ENCODE measurements at regions of chr1 and their contacts with region 1.

Region 1: GRCh38 chr1:226662642-226663326 is 76.3 kb downstream of the ITPKB start:
- DNase-seq: peak; percentile 69 to 99 (median 85)
- ATAC-seq: peak; percentile 83
- H3K4me3 ChIP-seq: peak overlapping the region; percentile 1 to 13
- H3K4me3 Mint-ChIP-seq: peak overlapping the region; percentile 59
- H3K27ac ChIP-seq: peak overlapping the region in 1 of 2 experiments; percentile 65
- H3K27ac Mint-ChIP-seq: no peak overlapping the region
- H3K4me1 ChIP-seq: no peaks in the 10 kb centered on the region
- H3K4me1 Mint-ChIP-seq: peaks cover 89% of the 10 kb centered on the region
- H3K27me3 ChIP-seq: no peaks in the 10 kb centered on the region
- H3K27me3 Mint-ChIP-seq: no peaks in the 10 kb centered on the region
- CTCF ChIP-seq: no peak

Region 2: GRCh38 chr1:225735252-225736149 is 927.3 kb before region 1 on chr1:
- CTCF ChIA-PET with region 1: no interaction called
- POLR2A ChIA-PET with region 1: no interaction called
- intact Hi-C with region 1: no loop called
- DNase-seq: no peak
- ATAC-seq: no peak
- H3K4me3 ChIP-seq: no peak overlapping the region
- H3K4me3 Mint-ChIP-seq: no peak overlapping the region
- H3K27ac ChIP-seq: no peak overlapping the region
- H3K27ac Mint-ChIP-seq: no peak overlapping the region
- H3K4me1 ChIP-seq: no peaks in the 10 kb centered on the region
- H3K4me1 Mint-ChIP-seq: no peaks in the 10 kb centered on the region
- H3K27me3 ChIP-seq: no peaks in the 10 kb centered on the region
- H3K27me3 Mint-ChIP-seq: no peaks in the 10 kb centered on the region
- CTCF ChIP-seq: no peak

Region 3: GRCh38 chr1:226186124-226187018 is 476.4 kb before region 1 on chr1 and contains the start of gene ACBD3:
- CTCF ChIA-PET with region 1: no interaction called
- POLR2A ChIA-PET with region 1: no interaction called
- intact Hi-C with region 1: no loop called
- DNase-seq: peak; percentile 67 to 95 (median 87)
- ATAC-seq: peak; percentile 97
- H3K4me3 ChIP-seq: peak within 1 kb of the TSS; percentile 82 to 90
- H3K4me3 Mint-ChIP-seq: peak within 1 kb of the TSS; percentile 92
- H3K27ac ChIP-seq: peak within 1 kb of the TSS; percentile 72 to 88
- H3K27ac Mint-ChIP-seq: peak within 1 kb of the TSS; percentile 95
- H3K4me1 ChIP-seq: peaks cover 41% of the 10 kb centered on the region
- H3K4me1 Mint-ChIP-seq: peaks cover 40% of the 10 kb centered on the region
- H3K27me3 ChIP-seq: no peaks in the 10 kb centered on the region
- H3K27me3 Mint-ChIP-seq: no peaks in the 10 kb centered on the region
- CTCF ChIP-seq: no peak
- total RNA-seq, gene ACBD3: 40.9 to 41.4 TPM

Region 4: DNA sequence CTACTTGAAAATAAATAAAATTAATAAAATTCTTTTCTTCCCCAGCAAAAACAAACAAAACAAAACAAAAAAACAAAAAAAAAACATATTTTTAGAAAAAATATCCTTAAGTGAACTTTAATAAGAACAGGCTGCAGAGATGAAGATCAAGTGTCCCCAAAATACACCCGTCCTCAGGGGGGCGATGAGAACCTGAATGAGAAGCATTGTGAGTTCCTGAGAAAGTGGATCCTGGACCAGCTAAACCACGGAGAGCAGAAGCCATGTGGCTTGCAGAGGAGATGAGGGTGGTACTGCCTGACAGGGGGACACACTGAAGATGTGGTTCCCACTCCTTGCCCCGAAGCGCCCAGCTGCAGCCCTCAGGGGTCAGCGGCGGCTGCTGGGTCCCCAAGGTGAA is 13.0 kb before region 1 on chr1:
- CTCF ChIA-PET with region 1: interaction called, 11 read pairs
- POLR2A ChIA-PET with region 1: interaction called, 10 read pairs
- intact Hi-C with region 1: loop called in 1 of 2 experiments (anchors 1 kb)
- DNase-seq: peak in 6 of 9 experiments; percentile 53 to 74 (median 64)
- ATAC-seq: no peak
- H3K4me3 ChIP-seq: no peak overlapping the region
- H3K4me3 Mint-ChIP-seq: no peak overlapping the region
- H3K27ac ChIP-seq: peak overlapping the region in 1 of 2 experiments; percentile 23
- H3K27ac Mint-ChIP-seq: no peak overlapping the region
- H3K4me1 ChIP-seq: peaks cover 52% of the 10 kb centered on the region
- H3K4me1 Mint-ChIP-seq: peaks cover 57% of the 10 kb centered on the region
- H3K27me3 ChIP-seq: no peaks in the 10 kb centered on the region
- H3K27me3 Mint-ChIP-seq: no peaks in the 10 kb centered on the region
- CTCF ChIP-seq: peak; percentile 59

Region 5: DNA sequence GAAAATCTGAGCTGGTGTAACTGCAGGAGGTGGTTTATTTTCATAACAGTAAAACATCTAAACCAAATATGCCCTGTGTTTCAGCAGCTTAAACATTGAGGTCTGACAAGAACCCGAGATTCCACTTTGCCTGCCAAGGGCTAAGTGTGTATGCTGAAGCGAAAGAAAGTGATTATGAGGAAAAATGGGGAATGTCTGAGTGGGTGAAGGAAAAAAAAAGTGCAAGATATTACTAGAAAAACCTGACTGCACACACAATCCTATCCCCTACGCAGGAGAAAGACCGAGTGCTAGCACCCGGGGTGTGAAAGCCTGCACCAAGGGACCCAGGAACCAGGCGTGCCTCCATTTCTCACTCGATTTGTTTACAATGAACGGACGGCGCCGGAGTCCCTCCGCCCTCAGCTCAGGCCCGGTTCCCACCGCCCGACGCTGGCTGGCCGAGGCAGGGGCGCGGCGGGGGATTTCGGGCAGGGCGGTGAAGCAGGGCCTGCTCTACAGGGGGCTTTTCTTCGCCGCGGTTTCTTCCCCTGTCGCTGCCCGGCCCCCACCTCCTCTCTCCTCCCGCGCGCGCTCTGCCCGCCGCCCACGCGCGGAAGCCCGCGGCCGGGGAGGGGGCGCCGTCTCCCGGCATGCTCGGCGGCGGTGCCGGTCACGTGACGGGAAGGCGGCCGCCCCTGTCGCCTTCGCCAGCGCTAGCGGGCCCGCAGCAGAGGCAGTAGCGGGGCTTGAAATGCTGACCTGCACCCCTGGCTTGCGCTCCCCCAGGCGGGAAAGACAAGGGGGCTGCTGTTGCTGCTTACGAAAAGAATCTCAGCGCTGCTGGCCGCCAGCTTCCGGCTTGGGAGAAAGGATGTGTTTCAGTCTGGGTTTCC is 40.4 kb after region 1 on chr1:
- CTCF ChIA-PET with region 1: interaction called, 5 read pairs
- POLR2A ChIA-PET with region 1: no interaction called
- intact Hi-C with region 1: loop called in 1 of 2 experiments (anchors 1 kb)
- DNase-seq: peak; percentile 56 to 94 (median 80)
- ATAC-seq: peak; percentile 82
- H3K4me3 ChIP-seq: peak overlapping the region; percentile 51 to 54
- H3K4me3 Mint-ChIP-seq: peak overlapping the region; percentile 72
- H3K27ac ChIP-seq: peak overlapping the region; percentile 72 to 92
- H3K27ac Mint-ChIP-seq: peak overlapping the region; percentile 92
- H3K4me1 ChIP-seq: peaks cover 85% of the 10 kb centered on the region
- H3K4me1 Mint-ChIP-seq: peaks cover 88% of the 10 kb centered on the region
- H3K27me3 ChIP-seq: no peaks in the 10 kb centered on the region
- H3K27me3 Mint-ChIP-seq: no peaks in the 10 kb centered on the region
- CTCF ChIP-seq: no peak

Measured in CD8-positive, alpha-beta T cell (primary cell).